GM12878 (cell line): ENCODE measurements at regions of chr4 and their contacts with region 1.

Region 1: GRCh38 chr4:184538023-184538599 is 63.8 kb upstream of the IRF2 start:
- DNase-seq: peak; percentile 83
- ATAC-seq: peak; percentile 87
- H3K4me3 ChIP-seq: peak overlapping the region; percentile 88
- H3K27ac ChIP-seq: peak overlapping the region; percentile 86
- H3K4me1 ChIP-seq: peaks cover 23% of the 10 kb centered on the region
- H3K27me3 ChIP-seq: no peaks in the 10 kb centered on the region
- CTCF ChIP-seq: peak; percentile 61 to 79 (median 69)
- EP300 ChIP-seq: no peak
- POLR2A ChIP-seq: no peak
- RAD21 ChIP-seq: peak; percentile 96

Region 2: DNA sequence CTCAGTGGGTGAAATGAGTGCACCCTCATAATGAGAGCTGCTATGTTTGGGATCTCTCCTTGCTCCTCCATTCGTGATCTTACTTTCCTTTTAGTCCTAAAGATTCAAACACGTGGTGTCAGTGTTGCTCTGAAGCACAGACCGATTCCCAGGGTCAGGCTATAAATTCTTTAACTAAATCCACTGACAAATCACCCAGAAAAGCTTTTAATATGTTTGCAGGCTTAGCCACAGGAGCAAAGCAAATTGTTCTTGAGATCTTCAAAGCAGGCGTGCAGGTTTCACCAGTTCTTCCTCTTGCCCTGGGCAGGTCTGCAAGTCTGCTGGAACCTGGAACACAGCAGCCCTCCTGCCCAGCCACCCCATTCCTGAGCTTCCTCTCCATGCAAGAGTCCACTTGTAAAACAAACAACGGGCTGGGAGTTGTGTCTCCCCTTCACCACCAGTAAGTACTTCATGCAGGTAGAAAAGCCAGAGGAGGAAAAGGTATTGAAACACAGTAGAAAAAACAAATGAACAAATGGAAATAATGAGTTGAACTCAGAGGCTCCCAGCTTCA is 250.3 kb before region 1 on chr4:
- CTCF ChIA-PET with region 1: interaction called, 36 read pairs
- POLR2A ChIA-PET with region 1: interaction called, 6 read pairs
- RAD21 ChIA-PET with region 1: interaction called, 69 read pairs
- SMC1A ChIA-PET with region 1: interaction called, 65 read pairs
- in situ Hi-C with region 1: loop called (anchors 5 kb)
- intact Hi-C with region 1: loop called (anchors 1 kb)
- DNase-seq: no peak
- ATAC-seq: peak; percentile 4; the same call in 1 of the 3 replicates
- H3K4me3 ChIP-seq: peak overlapping the region; percentile 55
- H3K27ac ChIP-seq: peak overlapping the region; percentile 99
- H3K4me1 ChIP-seq: peaks cover 64% of the 10 kb centered on the region
- H3K27me3 ChIP-seq: no peaks in the 10 kb centered on the region
- CTCF ChIP-seq: peak in 2 of 3 experiments; percentile 13 to 27; a peak in 3 of 6 replicates
- EP300 ChIP-seq: no peak
- POLR2A ChIP-seq: 0 out of 2 replicates have a peak, but pooled peaks have one; percentile 20
- RAD21 ChIP-seq: peak; percentile 53

Region 3: DNA sequence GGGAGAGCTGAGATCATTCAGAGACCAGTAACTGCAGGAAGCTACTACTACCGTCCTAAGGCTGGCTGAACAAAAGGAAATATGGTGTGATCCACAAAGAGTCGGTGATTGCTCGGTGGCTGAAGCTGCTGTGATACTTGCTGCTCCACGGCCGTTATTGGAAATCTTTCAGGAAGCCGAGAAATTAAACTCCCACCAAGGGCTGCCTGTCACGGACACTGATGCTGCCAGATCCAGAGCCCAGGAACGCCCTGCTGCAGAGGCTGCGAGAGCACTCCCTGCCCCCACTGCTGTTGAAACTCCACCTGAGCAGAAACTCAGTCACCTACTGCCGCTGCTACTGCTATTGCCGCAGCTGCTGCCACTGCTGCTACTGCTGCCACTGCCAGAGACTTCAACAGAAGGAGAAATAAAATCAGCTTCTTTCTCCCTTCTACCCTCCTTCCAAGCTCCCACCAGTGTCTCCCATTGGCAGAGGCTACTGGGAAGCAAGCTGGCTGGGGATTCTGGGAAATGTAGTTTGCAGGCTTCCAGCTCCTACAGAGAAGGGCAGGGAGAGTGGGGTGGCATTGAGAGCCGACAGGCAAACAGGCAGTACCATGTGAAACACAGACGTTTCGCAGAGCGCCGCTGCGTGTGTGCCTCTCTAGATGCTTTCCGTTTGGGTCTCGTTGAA is 194.5 kb before region 1 on chr4:
- CTCF ChIA-PET with region 1: interaction called, 54 read pairs
- POLR2A ChIA-PET with region 1: interaction called, 31 read pairs
- RAD21 ChIA-PET with region 1: interaction called, 151 read pairs
- SMC1A ChIA-PET with region 1: interaction called, 138 read pairs
- in situ Hi-C with region 1: no loop called
- intact Hi-C with region 1: no loop called
- DNase-seq: peak; percentile 69
- ATAC-seq: peak; percentile 51
- H3K4me3 ChIP-seq: peak overlapping the region; percentile 55
- H3K27ac ChIP-seq: peak overlapping the region; percentile 86
- H3K4me1 ChIP-seq: peaks cover 52% of the 10 kb centered on the region
- H3K27me3 ChIP-seq: no peaks in the 10 kb centered on the region
- CTCF ChIP-seq: no peak
- EP300 ChIP-seq: peak in 1 of 2 experiments; percentile 14; a peak in 1 of 4 replicates
- POLR2A ChIP-seq: peak; percentile 72
- RAD21 ChIP-seq: no peak

Region 4: DNA sequence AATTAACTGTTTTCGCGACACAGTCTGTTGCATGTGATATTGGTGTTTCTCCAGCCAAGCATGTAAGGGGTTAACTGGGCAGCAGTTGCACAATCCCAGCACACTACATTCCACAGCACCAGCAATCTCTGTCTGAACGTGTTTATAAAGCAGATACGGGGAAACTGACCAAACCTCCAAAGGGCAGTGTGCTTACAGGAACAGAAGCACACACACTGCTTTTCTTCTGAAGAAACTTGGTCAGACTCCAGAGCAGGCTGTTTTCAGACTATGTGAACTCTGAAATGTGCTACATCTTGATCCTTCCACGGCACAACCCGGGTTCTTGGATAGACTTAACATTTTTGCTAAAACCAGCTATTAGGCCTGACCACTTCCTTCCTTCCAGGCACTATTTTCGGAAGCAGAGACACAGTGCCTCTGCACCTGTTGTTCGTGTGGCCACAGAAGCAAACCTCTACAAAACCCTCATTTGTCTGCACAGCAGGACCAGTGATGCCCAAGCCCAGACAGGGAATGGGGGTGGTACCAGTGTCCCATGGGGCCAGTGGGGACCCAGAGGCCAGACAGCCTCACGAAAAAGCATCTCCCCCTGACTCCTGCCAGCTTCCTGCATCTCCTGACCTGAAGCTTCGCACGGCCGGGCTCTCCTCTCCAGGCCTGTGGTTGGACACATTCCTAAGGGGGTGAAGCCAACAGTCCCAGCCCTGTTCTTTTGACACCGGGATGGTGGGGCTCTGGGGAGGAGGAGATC is 153.9 kb before region 1 on chr4:
- CTCF ChIA-PET with region 1: interaction called, 5 read pairs
- POLR2A ChIA-PET with region 1: interaction called, 3 read pairs
- RAD21 ChIA-PET with region 1: interaction called, 20 read pairs
- SMC1A ChIA-PET with region 1: interaction called, 36 read pairs
- in situ Hi-C with region 1: no loop called
- intact Hi-C with region 1: no loop called
- DNase-seq: peak; percentile 92
- ATAC-seq: peak; percentile 77
- H3K4me3 ChIP-seq: peak overlapping the region; percentile 59; the same call in 1 of the 2 replicates
- H3K27ac ChIP-seq: peak overlapping the region; percentile 88
- H3K4me1 ChIP-seq: peaks cover 68% of the 10 kb centered on the region
- H3K27me3 ChIP-seq: no peaks in the 10 kb centered on the region
- CTCF ChIP-seq: no peak
- EP300 ChIP-seq: peak; percentile 76 to 86
- POLR2A ChIP-seq: peak; percentile 70
- RAD21 ChIP-seq: no peak

Region 5: GRCh38 chr4:184474263-184475095 is 63.6 kb before region 1 on chr4 and contains the start of gene IRF2:
- CTCF ChIA-PET with region 1: no interaction called
- POLR2A ChIA-PET with region 1: interaction called, 30 read pairs
- RAD21 ChIA-PET with region 1: interaction called, 57 read pairs
- SMC1A ChIA-PET with region 1: interaction called, 36 read pairs
- in situ Hi-C with region 1: no loop called
- intact Hi-C with region 1: loop called (anchors 1 kb)
- DNase-seq: peak; percentile 93
- ATAC-seq: peak; percentile 75
- H3K4me3 ChIP-seq: peak within 1 kb of the TSS; percentile 99
- H3K27ac ChIP-seq: peak within 1 kb of the TSS; percentile 92
- H3K4me1 ChIP-seq: peaks cover 14% of the 10 kb centered on the region
- H3K27me3 ChIP-seq: no peaks in the 10 kb centered on the region
- CTCF ChIP-seq: no peak
- EP300 ChIP-seq: peak; percentile 51; a peak in 3 of 4 replicates
- POLR2A ChIP-seq: peak; percentile 87
- RAD21 ChIP-seq: peak; percentile 47; the same call in 1 of the 2 replicates
- polyA plus RNA-seq, gene IRF2: 58.4 to 59.9 TPM

Region 6: GRCh38 chr4:184649026-184649970 is 111.2 kb after region 1 on chr4 and contains the starts of genes CASP3 and PRIMPOL:
- CTCF ChIA-PET with region 1: no interaction called
- POLR2A ChIA-PET with region 1: interaction called, 7 read pairs
- RAD21 ChIA-PET with region 1: interaction called, 4 read pairs
- SMC1A ChIA-PET with region 1: interaction called, 3 read pairs
- in situ Hi-C with region 1: no loop called
- intact Hi-C with region 1: loop called (anchors 5 kb)
- DNase-seq: peak; percentile 60
- ATAC-seq: peak; percentile 90
- H3K4me3 ChIP-seq: peak within 1 kb of the TSS; percentile 98
- H3K27ac ChIP-seq: peak within 1 kb of the TSS; percentile 85
- H3K4me1 ChIP-seq: peaks cover 12% of the 10 kb centered on the region; the same call in 1 of the 2 replicates
- H3K27me3 ChIP-seq: no peaks in the 10 kb centered on the region
- CTCF ChIP-seq: peak in 2 of 3 experiments; percentile 26 to 43; a peak in 3 of 6 replicates
- EP300 ChIP-seq: no peak
- POLR2A ChIP-seq: peak; percentile 93
- RAD21 ChIP-seq: peak; percentile 28
- polyA plus RNA-seq, gene CASP3: 50.0 to 59.0 TPM
- polyA plus RNA-seq, gene PRIMPOL: 10.6 to 11.5 TPM

Region 7: GRCh38 chr4:184833046-184833818 is 295.1 kb after region 1 on chr4:
- CTCF ChIA-PET with region 1: no interaction called
- POLR2A ChIA-PET with region 1: no interaction called
- RAD21 ChIA-PET with region 1: no interaction called
- SMC1A ChIA-PET with region 1: no interaction called
- in situ Hi-C with region 1: no loop called
- intact Hi-C with region 1: no loop called
- DNase-seq: no peak
- ATAC-seq: peak; percentile 50; the same call in 2 of the 3 replicates
- H3K4me3 ChIP-seq: no peak overlapping the region
- H3K27ac ChIP-seq: no peak overlapping the region
- H3K4me1 ChIP-seq: no peaks in the 10 kb centered on the region
- H3K27me3 ChIP-seq: no peaks in the 10 kb centered on the region; a peak in 1 of 4 replicates
- CTCF ChIP-seq: no peak
- EP300 ChIP-seq: no peak
- POLR2A ChIP-seq: no peak
- RAD21 ChIP-seq: no peak

Region 8: GRCh38 chr4:184896868-184897715 is 359.0 kb after region 1 on chr4:
- CTCF ChIA-PET with region 1: no interaction called
- POLR2A ChIA-PET with region 1: no interaction called
- RAD21 ChIA-PET with region 1: no interaction called
- SMC1A ChIA-PET with region 1: no interaction called
- in situ Hi-C with region 1: no loop called
- intact Hi-C with region 1: no loop called
- DNase-seq: no peak
- ATAC-seq: peak; percentile 88
- H3K4me3 ChIP-seq: peak overlapping the region; percentile 47; the same call in 1 of the 2 replicates
- H3K27ac ChIP-seq: no peak overlapping the region; the same call in 1 of the 2 replicates
- H3K4me1 ChIP-seq: peaks cover 13% of the 10 kb centered on the region
- H3K27me3 ChIP-seq: no peaks in the 10 kb centered on the region
- CTCF ChIP-seq: no peak
- EP300 ChIP-seq: no peak
- POLR2A ChIP-seq: no peak
- RAD21 ChIP-seq: no peak